ENCODE measurements at regions of chr18 and their contacts with region 1.

Region 1: DNA sequence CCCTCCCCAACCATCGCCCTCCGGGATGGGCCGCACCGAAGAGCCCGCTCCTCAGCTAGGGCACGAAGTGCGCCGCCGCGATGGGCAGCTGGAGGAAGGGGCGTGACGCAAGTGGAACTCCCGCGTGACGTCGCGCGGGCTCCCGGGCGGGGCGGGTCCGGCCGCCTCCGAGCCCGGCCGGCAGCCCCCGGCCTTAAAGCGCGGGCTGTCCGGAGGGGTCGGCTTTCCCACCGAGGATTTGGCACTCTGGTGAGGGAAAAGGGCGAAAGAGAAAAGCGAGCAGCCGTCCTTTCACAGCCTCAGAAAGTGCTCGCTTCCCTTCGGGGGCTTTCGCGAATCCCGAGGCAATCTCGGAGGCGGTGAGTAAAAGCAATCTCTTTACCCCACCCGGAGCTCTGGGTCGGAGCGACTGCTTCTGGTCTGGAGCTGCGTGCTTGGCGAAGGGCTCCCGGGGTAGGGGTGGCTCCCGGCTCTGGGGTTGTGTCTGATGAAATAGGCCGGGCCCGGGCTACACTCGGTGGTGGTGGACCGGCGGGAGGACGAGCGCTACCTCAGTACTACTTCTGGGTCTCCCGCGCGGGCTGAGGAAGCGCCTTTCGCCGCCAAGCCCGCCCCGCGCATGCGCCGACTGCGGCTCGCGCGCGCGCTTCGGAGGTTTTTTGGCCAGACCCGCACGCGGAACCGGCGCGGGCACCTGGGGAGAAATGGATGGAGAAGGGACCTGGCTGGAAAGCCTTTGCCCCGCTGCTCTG is at the start of gene RBBP8:
- DNase-seq: peak; percentile 85
- H3K4me3 Mint-ChIP-seq: peak within 1 kb of the TSS; percentile 98
- H3K27ac Mint-ChIP-seq: peak within 1 kb of the TSS; percentile 95
- H3K4me1 Mint-ChIP-seq: peaks cover 41% of the 10 kb centered on the region
- H3K27me3 Mint-ChIP-seq: peaks cover 3% of the 10 kb centered on the region
- total RNA-seq, gene RBBP8: 93.4 and 95.1 TPM in 2 replicates

Region 2: GRCh38 chr18:21704603-21705364 is 1228.6 kb before region 1 on chr18 and contains the start of gene ABHD3:
- intact Hi-C with region 1: loop called (anchors 5 kb)
- DNase-seq: peak; percentile 91
- H3K4me3 Mint-ChIP-seq: peak within 1 kb of the TSS; percentile 96
- H3K27ac Mint-ChIP-seq: peak within 1 kb of the TSS; percentile 90
- H3K4me1 Mint-ChIP-seq: peaks cover 34% of the 10 kb centered on the region
- H3K27me3 Mint-ChIP-seq: no peaks in the 10 kb centered on the region
- total RNA-seq, gene ABHD3: 29.2 and 36.0 TPM in 2 replicates

Region 3: GRCh38 chr18:21831413-21831831 is 1102.0 kb before region 1 on chr18:
- intact Hi-C with region 1: no loop called
- DNase-seq: no peak
- H3K4me3 Mint-ChIP-seq: no peak overlapping the region
- H3K27ac Mint-ChIP-seq: no peak overlapping the region
- H3K4me1 Mint-ChIP-seq: no peaks in the 10 kb centered on the region
- H3K27me3 Mint-ChIP-seq: no peaks in the 10 kb centered on the region

Region 4: DNA sequence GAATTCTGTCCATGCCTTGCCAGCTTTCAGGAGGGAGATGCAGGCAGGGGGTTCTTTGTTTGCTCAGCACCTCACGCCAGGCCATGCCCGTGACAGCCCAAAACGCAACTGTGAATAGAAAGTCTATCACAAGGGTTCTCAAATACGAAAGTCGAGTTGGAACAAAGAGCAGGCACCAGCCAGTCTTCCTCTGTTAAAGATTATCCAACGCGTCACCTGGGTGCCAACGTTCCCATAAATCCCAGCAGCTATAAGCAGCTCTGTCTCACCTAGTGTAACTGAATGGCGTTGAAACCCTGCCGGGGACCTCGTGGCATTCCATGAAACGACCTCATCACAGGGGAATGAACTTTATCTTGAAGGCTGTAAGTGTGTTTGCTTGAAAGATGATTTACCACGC is 848.8 kb before region 1 on chr18:
- intact Hi-C with region 1: no loop called
- DNase-seq: no peak
- H3K4me3 Mint-ChIP-seq: no peak overlapping the region
- H3K27ac Mint-ChIP-seq: no peak overlapping the region
- H3K4me1 Mint-ChIP-seq: no peaks in the 10 kb centered on the region
- H3K27me3 Mint-ChIP-seq: no peaks in the 10 kb centered on the region

Region 5: DNA sequence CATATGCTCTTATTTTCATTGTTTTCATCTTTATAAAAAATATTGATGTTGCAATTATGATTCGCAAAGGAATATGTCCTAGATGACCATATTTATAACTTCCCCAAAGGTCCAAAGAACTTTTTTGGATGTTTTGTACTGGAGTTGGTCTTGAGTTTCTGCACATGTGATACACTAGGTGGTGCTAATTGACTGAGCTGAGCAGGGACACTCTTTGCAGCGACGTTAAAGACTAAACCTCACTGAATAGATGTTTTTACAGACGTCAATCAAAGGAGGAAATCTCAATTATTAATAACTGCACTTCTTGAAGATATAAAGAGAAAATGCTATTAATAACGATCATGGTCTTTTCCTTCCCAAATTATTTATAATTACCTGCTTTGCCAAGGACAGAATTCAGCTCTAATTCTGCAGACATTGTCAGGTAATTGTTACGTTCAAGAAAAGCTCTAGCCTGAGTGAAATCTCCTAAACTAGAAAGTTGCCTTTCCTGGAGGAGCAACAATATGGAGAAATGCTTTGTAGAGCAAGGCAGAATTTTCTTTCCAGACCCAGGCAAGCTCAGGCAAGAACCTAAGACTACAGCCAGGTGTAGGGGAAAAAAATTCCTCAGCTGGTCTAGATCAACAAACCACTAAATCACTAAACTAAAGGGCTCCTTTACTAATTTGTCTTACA is 119.6 kb before region 1 on chr18:
- intact Hi-C with region 1: loop called (anchors 5 kb)
- DNase-seq: no peak
- H3K4me3 Mint-ChIP-seq: no peak overlapping the region
- H3K27ac Mint-ChIP-seq: no peak overlapping the region
- H3K4me1 Mint-ChIP-seq: no peaks in the 10 kb centered on the region
- H3K27me3 Mint-ChIP-seq: peaks cover 26% of the 10 kb centered on the region

Region 6: DNA sequence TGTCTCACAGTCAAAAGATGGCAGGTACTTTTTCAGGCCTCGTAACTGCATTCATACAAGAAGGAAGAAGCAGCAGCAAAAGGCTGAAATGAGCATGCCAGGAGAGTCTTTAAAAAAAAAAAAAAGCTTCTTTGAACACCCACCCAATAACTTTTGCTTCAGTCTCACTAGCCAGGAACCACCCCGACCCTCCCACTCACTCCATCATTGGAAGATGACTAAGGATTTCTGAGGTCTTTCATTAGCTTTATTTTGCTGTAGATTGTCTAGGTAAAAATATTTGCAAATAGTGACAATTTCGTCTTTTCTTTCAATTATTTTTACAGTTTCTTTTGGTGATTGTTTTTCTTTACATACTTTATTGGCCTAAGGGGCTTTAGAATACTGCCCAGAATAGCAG is 37.7 kb after region 1 on chr18:
- intact Hi-C with region 1: no loop called
- DNase-seq: no peak
- H3K4me3 Mint-ChIP-seq: no peak overlapping the region
- H3K27ac Mint-ChIP-seq: peak overlapping the region; percentile 18
- H3K4me1 Mint-ChIP-seq: peaks cover 16% of the 10 kb centered on the region
- H3K27me3 Mint-ChIP-seq: no peaks in the 10 kb centered on the region

Region 7: DNA sequence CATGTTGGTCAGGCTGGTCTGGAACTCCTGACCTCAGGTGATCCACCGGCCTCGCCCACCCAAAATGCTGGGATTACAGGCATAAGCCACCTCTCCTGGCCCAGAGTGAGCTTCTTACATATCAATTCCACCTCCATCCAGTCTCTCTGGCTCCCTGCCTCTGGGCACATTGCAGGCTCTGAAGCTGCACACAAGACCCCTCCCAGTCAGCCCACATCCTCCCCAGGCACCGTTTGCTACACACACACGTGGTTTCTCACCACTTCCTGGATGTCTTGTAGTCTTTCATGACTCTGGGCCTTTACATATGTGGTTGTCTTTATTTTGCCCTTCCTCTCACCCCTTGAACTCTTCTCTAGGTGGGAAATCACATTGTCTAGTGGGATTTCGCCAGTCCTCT is 137.9 kb after region 1 on chr18:
- intact Hi-C with region 1: loop called (anchors 5 kb)
- DNase-seq: peak; percentile 86
- H3K4me3 Mint-ChIP-seq: peak overlapping the region; percentile 63
- H3K27ac Mint-ChIP-seq: peak overlapping the region; percentile 97
- H3K4me1 Mint-ChIP-seq: peaks cover 60% of the 10 kb centered on the region
- H3K27me3 Mint-ChIP-seq: peaks cover 2% of the 10 kb centered on the region

Region 8: GRCh38 chr18:23356915-23357601 is 423.7 kb after region 1 on chr18:
- intact Hi-C with region 1: loop called (anchors 2 kb)
- DNase-seq: no peak
- H3K4me3 Mint-ChIP-seq: no peak overlapping the region
- H3K27ac Mint-ChIP-seq: no peak overlapping the region
- H3K4me1 Mint-ChIP-seq: peaks cover 21% of the 10 kb centered on the region
- H3K27me3 Mint-ChIP-seq: no peaks in the 10 kb centered on the region

Region 9: GRCh38 chr18:23437357-23438045 is 504.1 kb after region 1 on chr18:
- intact Hi-C with region 1: loop called (anchors 1 kb)
- DNase-seq: peak; percentile 74
- H3K4me3 Mint-ChIP-seq: peak overlapping the region; percentile 86
- H3K27ac Mint-ChIP-seq: peak overlapping the region; percentile 44
- H3K4me1 Mint-ChIP-seq: peaks cover 22% of the 10 kb centered on the region
- H3K27me3 Mint-ChIP-seq: peaks cover 2% of the 10 kb centered on the region

Region 10: DNA sequence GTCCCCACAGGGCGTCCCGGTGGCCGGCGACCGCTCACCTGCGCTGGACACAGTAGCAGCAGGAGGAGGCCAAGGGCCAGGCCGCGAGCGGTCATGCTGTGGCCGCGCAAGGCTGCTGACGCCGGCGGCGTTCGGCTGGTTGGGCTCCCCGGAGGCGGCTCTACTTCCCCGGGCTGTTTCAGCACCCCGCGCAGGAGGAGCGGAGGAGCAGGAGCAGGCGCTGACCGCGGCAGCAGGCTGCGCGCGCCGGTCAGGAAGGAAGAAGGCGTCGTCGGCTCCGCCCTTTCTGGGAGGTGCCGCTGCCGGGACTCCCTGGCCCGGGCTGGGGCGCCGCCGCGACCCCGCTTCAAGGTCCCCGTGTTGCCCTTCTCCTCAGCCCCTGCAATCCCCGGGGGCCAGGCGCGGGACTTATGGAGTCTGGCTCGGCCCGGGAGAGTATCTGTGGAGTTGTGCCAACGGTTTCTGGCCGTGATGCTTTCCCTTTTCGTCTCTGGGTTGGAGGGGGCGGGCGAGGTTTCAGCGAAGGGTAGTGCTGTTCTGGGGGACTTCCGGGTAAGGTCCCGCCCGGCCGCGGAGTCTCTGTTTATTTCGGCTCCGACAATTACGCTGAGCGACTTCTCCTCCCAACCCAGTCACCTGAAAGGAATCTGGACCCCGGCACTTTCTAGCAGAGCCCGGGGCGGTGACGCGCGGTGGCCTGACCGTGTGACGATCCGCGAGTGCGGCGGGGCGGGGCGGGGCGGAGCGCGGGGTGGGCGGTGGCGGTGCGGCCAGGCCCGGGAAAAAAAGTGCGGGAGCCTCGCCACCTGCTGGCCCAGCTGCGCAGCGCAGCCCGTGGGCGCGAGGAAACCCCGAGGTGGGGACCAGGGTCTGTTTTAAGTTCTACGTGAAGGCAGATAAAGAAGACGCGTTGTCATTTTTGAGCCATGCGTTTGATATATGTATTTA is 653.1 kb after region 1 on chr18 and contains the start of gene NPC1:
- intact Hi-C with region 1: loop called (anchors 5 kb)
- DNase-seq: peak; percentile 92
- H3K4me3 Mint-ChIP-seq: peak within 1 kb of the TSS; percentile 94
- H3K27ac Mint-ChIP-seq: peak within 1 kb of the TSS; percentile 93
- H3K4me1 Mint-ChIP-seq: peaks cover 42% of the 10 kb centered on the region
- H3K27me3 Mint-ChIP-seq: peaks cover 3% of the 10 kb centered on the region
- total RNA-seq, gene NPC1: 30.1 and 30.2 TPM in 2 replicates